SK-N-SH (cell line): ENCODE measurements at regions of chr3 and their contacts with region 1.

Region 1: GRCh38 chr3:189233225-189233858 is 61.6 kb downstream of the TPRG1 start:
- DNase-seq: peak; percentile 42
- H3K4me3 ChIP-seq: no peak overlapping the region; a peak in 1 of 4 replicates
- H3K27ac ChIP-seq: no peak overlapping the region
- H3K4me1 ChIP-seq: no peaks in the 10 kb centered on the region
- H3K27me3 ChIP-seq: peaks cover 9% of the 10 kb centered on the region; the same call in 1 of the 2 replicates
- CTCF ChIP-seq: peak; percentile 77
- EP300 ChIP-seq: no peak
- RAD21 ChIP-seq: peak; percentile 79

Region 2: GRCh38 chr3:188664795-188665194 is 568.5 kb before region 1 on chr3:
- CTCF ChIA-PET with region 1: no interaction called
- POLR2A ChIA-PET with region 1: no interaction called
- DNase-seq: peak; percentile 3
- H3K4me3 ChIP-seq: no peak overlapping the region
- H3K27ac ChIP-seq: no peak overlapping the region
- H3K4me1 ChIP-seq: no peaks in the 10 kb centered on the region
- H3K27me3 ChIP-seq: no peaks in the 10 kb centered on the region
- CTCF ChIP-seq: peak; percentile 27
- EP300 ChIP-seq: no peak
- RAD21 ChIP-seq: 0 out of 2 replicates have a peak, but pooled peaks have one; percentile 10

Region 3: DNA sequence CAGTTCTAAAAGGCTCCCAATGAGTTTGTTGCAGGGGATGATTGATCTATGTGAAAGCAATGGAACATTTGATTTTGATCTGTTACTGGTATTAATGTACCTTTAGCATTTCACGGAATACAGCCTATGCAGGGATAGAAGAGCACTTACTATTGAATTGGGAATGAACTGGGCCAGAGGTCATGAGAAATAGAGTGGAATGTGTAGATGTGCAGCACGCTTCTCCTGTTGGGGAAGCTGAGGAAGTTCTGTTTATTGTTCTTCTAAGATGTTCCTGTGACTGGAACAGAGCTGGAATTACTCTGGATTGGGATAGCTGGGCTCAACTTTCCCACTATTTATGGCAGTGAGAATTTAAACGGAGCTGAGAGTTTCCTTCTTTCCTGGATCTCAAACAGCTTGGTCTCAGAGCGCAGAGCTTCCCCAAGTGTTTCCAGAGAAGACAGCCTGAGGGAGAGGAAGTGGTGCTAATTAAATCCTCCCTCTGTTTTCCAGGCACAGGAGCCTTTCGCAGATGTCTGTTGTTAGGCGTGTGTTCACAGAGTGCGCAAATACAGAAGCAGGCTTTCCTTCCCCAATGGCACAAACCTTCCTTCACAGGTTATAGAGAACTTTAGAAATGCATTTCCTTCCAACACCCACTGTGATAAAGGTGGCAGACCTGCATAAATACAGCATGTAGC is 29.0 kb before region 1 on chr3:
- CTCF ChIA-PET with region 1: interaction called, 13 read pairs
- POLR2A ChIA-PET with region 1: no interaction called
- DNase-seq: peak; percentile 4
- H3K4me3 ChIP-seq: no peak overlapping the region
- H3K27ac ChIP-seq: no peak overlapping the region
- H3K4me1 ChIP-seq: no peaks in the 10 kb centered on the region
- H3K27me3 ChIP-seq: peaks cover 21% of the 10 kb centered on the region; the same call in 1 of the 2 replicates
- CTCF ChIP-seq: no peak
- EP300 ChIP-seq: no peak
- RAD21 ChIP-seq: no peak